ENCODE measurements at regions of chr20 and their contacts with region 1.

Region 1: DNA sequence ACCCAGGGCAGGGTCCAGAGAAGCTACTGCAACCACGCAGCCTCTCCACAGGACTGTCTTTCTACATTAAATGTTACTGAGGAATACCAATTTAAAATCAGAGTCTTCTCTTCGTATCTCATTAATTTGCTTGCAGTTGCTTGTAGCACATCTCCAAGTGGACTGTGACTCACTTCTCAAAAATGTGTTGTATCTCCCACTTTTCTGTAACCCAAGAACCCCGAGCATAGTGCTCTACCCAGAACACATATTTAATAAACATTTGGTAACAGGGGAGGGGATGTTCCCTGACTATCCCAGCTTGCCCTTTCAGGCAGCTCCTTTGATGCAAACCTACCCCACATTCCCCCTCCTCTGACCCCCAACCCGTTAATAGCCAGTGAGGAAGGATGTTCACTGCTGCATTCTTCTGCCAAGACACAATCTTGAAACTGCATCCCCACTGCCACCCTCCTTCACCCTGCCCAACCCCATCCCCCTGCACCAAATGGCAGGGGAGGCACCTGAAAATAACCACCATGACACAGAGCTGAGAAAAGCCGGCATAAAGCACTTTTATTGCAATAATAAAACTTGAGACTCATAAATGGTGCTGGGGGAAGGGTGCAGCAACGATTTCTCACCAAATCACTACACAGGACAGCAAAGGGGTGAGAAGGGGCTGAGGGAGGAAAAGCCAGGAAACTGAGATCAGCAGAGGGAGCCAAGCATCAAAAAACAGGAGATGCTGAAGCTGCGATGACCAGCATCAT is 24.2 kb downstream of the FKBP1A start:
- DNase-seq: no peak
- H3K4me3 Mint-ChIP-seq: no peak overlapping the region
- H3K27ac Mint-ChIP-seq: no peak overlapping the region
- H3K4me1 Mint-ChIP-seq: peaks cover 66% of the 10 kb centered on the region
- H3K27me3 Mint-ChIP-seq: no peaks in the 10 kb centered on the region

Region 2: GRCh38 chr20:1663917-1664316 is 295.3 kb after region 1 on chr20:
- intact Hi-C with region 1: loop called (anchors 10 kb)
- DNase-seq: no peak
- H3K4me3 Mint-ChIP-seq: peak overlapping the region; percentile 55
- H3K27ac Mint-ChIP-seq: peak overlapping the region; percentile 85
- H3K4me1 Mint-ChIP-seq: peaks cover 96% of the 10 kb centered on the region
- H3K27me3 Mint-ChIP-seq: no peaks in the 10 kb centered on the region

Measured in activated T-helper 1 cell treated with anti-CD3 and anti-CD28 coated beads, Interleukin-12 subunit alpha, Interleukin-12 subunit beta, Interleukin-2, Interleukin-4 antibody, amounts not matched to agents 30 ng/mL and 10 ng/mL and 1 ng/mL, durations not matched to agents 14 hours and 24 hours and 36 hours (primary cell).